Activated T-helper 1 cell treated with anti-CD3 and anti-CD28 coated beads, Interleukin-12 subunit alpha, Interleukin-12 subunit beta, Interleukin-2, Interleukin-4 antibody, amounts not matched to agents 30 ng/mL and 10 ng/mL and 1 ng/mL, durations not matched to agents 14 hours and 24 hours and 36 hours (primary cell): ENCODE measurements at regions of chr2 and their contacts with region 1.

Region 1: DNA sequence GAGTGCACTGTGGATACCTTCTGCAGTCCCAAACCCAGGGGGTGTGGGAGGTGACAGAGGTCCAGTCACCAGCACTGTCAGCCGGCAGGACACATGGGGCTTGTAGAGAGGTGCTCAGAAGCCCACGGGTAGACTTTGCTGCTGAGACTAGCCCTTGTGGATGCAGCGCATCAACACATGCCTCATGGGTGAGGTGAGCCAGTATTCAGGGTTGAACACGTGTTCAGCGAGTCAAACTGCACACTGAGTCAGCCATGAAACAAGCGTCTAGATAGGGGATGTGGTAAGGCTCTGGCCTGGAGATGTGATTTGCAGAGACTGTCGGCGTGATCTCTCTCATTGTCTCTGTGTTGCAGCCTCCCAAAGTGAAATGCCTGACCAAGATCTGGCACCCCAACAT is 35.8 kb upstream of the SCLY start:
- DNase-seq: peak; percentile 19
- H3K4me3 Mint-ChIP-seq: peak overlapping the region; percentile 8
- H3K27ac Mint-ChIP-seq: peak overlapping the region; percentile 82
- H3K4me1 Mint-ChIP-seq: peaks cover 34% of the 10 kb centered on the region
- H3K27me3 Mint-ChIP-seq: no peaks in the 10 kb centered on the region

Region 2: DNA sequence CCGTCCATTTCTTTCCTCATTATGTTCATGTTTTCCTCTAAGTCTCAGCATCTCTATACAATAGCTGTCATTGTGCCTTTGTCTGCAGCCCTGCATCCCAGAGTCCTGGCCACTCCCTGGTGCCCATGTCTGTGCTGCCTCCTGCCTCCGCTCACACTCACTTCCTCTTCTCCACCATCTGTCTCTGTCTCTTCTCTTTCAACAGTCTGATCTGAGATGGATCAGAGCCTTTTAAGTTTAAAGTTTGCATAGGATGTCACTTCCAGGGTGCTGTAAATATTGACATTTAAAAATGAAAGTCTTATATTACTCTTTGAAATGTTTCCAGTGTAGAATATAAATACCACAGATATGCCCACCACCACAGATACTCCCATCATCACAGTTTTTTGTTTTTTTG is 15.4 kb before region 1 on chr2:
- intact Hi-C with region 1: loop called (anchors 2 kb)
- DNase-seq: no peak
- H3K4me3 Mint-ChIP-seq: peak overlapping the region; percentile 60
- H3K27ac Mint-ChIP-seq: peak overlapping the region; percentile 97
- H3K4me1 Mint-ChIP-seq: peaks cover 58% of the 10 kb centered on the region
- H3K27me3 Mint-ChIP-seq: no peaks in the 10 kb centered on the region